ENCODE measurements at regions of chr18 and their contacts with region 1.

Region 1: GRCh38 chr18:7721532-7721931 is 154.4 kb downstream of the PTPRM start:
- DNase-seq: no peak
- ATAC-seq: no peak
- H3K4me3 ChIP-seq: no peak overlapping the region
- H3K27ac ChIP-seq: no peak overlapping the region
- H3K4me1 ChIP-seq: peaks cover 0 to 35% (median 15%) of the 10 kb centered on the region in 12 donors
- H3K27me3 ChIP-seq: no peaks in the 10 kb centered on the region
- CTCF ChIP-seq: no peak
- POLR2A ChIP-seq: no peak

Region 2: DNA sequence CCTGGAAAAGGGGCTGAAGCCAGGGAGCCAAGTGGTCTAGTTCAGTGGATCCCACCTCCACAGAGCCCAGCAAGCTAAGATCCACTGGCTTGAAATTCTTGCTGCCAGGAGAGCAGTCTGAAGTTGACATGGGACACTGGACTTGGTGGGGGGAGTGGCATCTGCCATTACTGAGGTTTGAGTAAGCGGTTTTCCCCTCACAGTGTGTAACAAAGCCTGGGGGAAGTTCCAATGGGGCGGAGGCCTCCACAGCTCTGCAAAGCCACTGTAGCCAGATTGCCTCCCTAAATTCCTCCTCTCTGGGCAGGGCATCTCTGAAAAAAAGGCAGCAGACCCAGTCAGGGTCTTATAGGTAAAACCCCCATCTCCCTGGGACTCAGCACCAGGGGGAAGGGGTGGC is 10.0 kb before region 1 on chr18:
- intact Hi-C with region 1: loop called in 1 of 10 experiments (anchors 1 kb)
- DNase-seq: no peak
- ATAC-seq: no peak
- H3K4me3 ChIP-seq: no peak overlapping the region
- H3K27ac ChIP-seq: no peak overlapping the region
- H3K4me1 ChIP-seq: peaks cover 0 to 19% (median 11%) of the 10 kb centered on the region in 12 donors
- H3K27me3 ChIP-seq: no peaks in the 10 kb centered on the region
- CTCF ChIP-seq: no peak
- POLR2A ChIP-seq: no peak